Left ventricle myocardium superior (tissue), 1 donor: ENCODE measurements at regions of chr14 and their contacts with region 1.

Region 1: DNA sequence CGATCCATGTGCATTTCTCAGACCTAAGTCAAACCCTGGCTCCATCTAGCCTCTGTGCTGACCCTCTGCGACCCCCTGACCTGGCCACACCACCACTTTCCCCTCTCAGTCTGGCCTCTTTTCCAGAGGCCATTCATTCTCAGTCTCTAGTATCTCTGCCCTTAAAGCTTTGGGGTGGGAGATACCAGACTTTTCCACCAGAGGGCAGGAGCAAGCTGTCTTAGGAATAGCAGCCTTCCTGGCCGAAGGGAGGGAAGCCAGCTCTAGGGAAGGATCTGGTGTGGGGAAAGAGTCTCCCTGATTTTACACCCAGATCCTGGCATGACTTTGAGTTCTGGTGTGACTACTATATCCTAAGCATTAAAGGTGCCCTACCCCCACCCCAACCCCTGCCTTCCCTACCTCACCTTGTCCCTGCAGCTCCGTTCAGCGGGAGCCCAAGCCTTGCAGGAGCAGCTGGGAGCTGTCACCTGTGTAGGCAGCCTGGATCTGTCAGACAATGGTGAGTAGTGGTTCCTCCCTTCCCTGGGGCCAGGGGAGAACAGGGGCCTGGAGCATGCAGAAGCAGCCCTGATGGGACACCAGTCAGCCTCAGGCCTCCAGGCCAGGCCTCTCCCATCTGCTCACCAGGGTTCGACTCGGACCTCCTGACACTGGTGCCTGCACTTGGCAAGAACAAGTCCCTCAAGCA is 6.6 kb downstream of the CARMIL3 start:
- DNase-seq: peak; percentile 58
- ATAC-seq: peak; percentile 86

Region 2: DNA sequence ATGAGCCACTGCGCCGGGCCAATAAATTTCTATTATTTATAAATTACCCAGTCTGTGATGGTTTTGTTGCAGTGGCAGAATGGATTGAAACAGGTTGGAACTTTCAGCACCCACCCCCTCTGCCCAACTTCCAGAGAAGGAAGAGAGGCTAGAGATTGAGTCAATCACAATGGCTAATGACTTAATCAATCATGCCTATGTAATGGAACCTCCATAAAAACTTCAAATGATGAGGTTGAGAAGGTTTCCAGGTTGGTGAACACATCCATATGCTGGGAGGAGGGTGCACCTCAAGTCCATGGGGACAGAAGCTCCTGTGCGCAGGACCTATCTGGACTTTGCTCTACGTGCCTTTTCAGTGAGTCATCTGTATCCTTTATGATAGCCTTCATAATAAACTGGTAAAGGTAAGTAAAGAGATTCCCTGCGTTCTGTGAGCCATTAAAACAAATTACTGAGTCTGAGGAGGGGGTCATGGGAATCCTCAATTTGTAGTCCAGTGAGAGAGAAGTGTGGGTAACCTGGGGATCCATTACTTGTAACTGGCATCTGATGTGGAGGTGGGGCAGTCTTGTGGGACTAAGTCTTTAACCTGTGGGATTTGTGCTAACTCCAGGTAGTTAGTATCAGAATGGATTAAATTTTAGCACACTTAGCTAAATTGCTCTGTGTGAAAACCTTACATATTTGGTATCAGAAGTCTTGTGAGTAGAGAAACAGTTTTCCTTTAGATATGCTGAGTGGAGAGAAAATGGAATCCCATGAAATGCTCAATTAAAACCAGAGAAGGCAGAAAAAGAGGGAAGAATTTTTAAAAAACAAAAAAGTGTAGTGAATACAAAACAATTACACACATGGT is 600.6 kb before region 1 on chr14:
- intact Hi-C with region 1: no loop called
- DNase-seq: no peak
- ATAC-seq: peak; percentile 17

Region 3: GRCh38 chr14:24108336-24108874 is 50.0 kb after region 1 on chr14:
- intact Hi-C with region 1: loop called (anchors 2 kb)
- DNase-seq: no peak
- ATAC-seq: peak; percentile 11